ENCODE measurements at regions of chr12 and their contacts with region 1.

Region 1: DNA sequence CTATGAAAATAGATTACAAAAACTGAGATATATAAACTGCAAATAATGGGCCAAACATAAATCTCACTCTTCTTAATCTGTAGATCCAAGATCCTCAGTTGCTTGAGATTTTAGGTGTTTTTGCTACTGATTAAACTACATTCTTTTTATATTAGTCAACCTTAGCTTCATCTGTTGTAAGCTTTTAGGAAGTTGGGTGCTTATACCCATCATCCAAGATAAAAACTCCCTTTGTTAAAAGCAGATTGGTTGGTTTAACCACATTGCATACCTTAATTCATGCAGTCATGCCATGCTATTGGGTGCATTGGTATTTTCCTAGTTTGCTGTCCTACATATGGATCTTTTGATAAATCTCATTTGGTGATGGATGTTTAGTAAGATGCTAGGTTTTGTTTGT is 46.2 kb upstream of the DIP2B start:
- DNase-seq: peak; percentile 47
- ATAC-seq: peak; percentile 37
- H3K4me3 ChIP-seq: no peak overlapping the region
- H3K27ac ChIP-seq: no peak overlapping the region
- H3K4me1 ChIP-seq: no peaks in the 10 kb centered on the region
- H3K27me3 ChIP-seq: no peaks in the 10 kb centered on the region
- CTCF ChIP-seq: no peak
- POLR2A ChIP-seq: no peak
- RAD21 ChIP-seq: no peak

Region 2: DNA sequence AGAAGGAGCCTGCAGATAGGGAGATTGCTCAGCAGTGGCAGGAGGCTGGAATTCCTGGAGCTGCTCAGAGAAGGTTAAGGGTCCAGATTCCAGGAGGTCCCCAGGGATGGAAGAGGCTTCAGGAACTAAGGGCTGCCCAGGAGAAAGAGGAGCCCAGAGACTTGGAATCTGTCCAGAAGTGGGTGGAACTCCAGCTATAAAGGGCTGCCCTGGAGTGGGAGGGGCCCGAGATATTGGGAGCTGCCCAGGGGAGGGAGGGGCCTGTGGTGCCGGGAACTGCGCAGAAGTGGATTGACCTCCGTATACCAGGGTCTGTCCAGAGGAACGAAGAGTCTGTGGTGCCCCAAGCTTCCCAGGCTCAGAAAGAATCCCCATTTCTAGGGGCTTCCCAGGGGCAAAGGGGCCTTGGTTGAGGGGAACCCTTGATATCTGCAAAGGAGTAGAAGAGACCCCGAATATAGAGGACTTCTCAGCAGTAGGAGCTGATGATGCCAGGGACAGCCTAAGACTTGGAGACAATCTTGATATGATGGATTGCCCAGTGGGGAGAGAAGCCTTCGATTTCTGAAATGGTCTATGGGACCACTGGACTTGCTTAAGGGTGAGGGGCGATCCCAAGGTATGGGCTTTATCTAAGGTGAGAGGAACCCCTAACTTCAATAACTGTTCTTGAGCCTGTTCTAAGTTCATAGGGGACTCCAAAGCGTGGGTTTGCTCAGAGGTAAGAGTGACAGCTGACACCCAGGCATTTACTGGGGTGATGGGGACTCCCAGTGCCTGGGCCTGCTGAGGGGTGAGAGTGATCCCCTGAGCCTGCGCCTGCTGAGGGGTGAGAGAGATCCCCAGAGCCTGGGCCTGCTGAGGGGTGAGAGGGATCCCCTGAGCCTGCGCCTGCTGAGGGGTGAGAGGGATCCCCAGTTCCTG is 107.2 kb before region 1 on chr12:
- CTCF ChIA-PET with region 1: no interaction called
- POLR2A ChIA-PET with region 1: interaction called, 20 read pairs
- dilution Hi-C with region 1: no loop called
- in situ Hi-C with region 1: no loop called
- intact Hi-C with region 1: no loop called
- DNase-seq: no peak
- ATAC-seq: no peak
- H3K4me3 ChIP-seq: no peak overlapping the region
- H3K27ac ChIP-seq: no peak overlapping the region
- H3K4me1 ChIP-seq: peaks cover 8% of the 10 kb centered on the region
- H3K27me3 ChIP-seq: no peaks in the 10 kb centered on the region; the same call in none of the 2 replicates
- CTCF ChIP-seq: no peak
- POLR2A ChIP-seq: no peak
- RAD21 ChIP-seq: no peak